Heart right ventricle (tissue), 16 donors: ENCODE measurements at regions of chr12 and their contacts with region 1.

Region 1: DNA sequence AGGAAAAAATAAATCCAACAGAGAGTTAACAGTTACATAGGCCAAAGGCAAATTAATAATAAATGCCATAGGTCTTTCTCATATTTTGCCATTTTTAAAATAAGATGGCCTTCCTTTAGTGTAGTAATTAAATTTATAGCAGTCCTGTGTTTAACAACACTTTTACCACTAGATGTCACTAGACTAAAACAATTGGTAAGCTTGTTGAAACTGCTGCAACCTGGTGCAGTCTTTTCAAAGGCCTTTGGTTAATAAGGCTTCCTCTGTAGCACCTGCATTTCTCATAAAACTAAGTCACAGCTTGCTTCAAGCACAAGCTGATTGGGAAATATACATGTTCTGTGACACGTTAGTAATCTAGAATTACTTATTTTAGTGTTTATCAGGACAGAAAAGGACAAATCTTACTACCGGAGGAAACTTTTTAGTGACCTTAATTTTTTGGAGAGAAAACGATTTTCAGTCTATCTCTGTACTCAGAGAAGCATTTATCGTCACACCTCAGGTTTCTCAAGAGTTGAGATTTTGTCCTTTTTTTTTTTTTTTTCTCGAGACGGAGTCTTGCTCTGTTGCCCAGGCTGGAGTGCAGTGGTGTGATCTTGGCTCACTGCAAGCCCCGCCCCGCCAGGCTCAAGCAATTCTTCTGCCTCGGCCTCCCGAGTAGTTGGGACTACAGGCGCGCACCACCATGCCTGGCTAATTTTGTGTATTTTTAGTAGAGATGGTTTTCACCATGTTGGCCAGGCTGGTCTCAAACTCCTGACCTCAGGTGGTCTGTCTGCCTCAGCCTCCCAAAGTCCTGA is 20.0 kb downstream of the BORCS5 start:
- DNase-seq: no peak
- ATAC-seq: peak in 7 of 8 donors; percentile 65 to 89 (median 80)
- H3K4me3 ChIP-seq: no peak overlapping the region
- H3K27ac ChIP-seq: peak overlapping the region in 1 of 10 donors; percentile 10
- H3K4me1 ChIP-seq: peaks cover 0 to 35% (median 9%) of the 10 kb centered on the region in 9 donors
- H3K27me3 ChIP-seq: no peaks in the 10 kb centered on the region
- CTCF ChIP-seq: peak; percentile 51 to 86 (median 75)

Region 2: DNA sequence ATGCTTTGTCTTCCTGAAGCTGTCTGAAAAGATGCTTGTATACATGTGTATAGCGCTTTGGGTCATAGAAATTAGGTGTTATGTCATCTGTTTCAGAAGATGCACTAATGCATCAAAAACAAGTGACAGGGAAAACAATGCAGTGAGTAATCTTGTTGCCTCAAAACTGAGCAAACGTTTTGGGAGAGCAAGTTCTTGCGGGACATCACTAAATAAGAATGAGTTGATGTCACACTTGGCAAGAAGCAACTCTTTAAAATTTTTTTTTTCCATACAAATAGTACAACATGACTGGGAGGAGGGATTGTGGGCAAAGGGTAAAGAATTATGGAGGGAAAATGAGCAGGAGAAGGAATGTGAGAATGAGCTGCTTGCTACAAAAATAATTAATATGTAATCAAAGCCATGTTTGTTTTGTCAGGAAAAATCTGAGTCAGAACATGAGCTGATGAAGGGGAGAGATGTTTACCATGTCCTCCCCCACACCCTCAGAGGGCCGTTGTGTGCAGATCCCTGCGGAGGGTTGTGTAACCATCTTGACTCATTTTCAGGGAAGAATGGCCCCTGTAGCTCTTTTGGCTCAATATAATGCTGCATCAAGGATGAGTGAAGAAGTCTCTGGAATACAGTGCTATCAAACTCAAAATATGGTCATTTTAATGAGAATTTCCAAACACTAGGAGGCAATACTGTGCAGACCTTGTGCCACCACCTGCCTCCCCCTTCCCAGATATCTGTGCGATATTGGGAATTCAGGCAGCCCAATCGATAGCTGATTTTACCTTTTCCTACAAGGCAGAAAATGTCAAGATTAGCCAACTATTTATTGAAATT is 21.4 kb after region 1 on chr12:
- intact Hi-C with region 1: no loop called
- DNase-seq: peak; percentile 29 to 48
- ATAC-seq: peak; percentile 82 to 97 (median 91)
- H3K4me3 ChIP-seq: no peak overlapping the region
- H3K27ac ChIP-seq: peak overlapping the region in 8 of 10 donors; percentile 1 to 59 (median 34)
- H3K4me1 ChIP-seq: peaks cover 0 to 32% (median 10%) of the 10 kb centered on the region in 9 donors
- H3K27me3 ChIP-seq: no peaks in the 10 kb centered on the region
- CTCF ChIP-seq: peak in 4 of 9 donors; percentile 18 to 35 (median 31)

Region 3: DNA sequence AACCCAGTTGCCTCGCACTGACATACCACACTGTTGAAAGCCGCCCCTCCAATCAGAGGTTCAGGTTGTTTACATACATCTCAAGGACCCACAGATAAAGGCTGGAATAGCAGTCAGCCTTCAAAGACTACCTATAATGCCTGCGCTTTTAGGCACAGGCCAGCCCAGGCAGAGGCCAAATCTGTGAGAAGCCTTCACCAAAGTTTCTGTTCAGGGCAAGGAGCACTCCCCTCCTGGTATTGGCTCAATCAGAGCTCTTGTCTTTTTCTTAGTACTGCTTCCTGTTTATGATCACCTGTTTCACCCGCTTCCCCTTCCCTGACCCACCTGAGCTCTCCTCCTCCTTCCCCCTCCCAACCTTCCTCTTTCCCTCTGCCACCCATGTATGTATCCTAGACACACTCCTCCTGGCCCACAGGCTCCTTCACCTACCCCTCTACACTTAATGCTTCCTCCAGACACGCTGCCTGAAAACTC is 151.0 kb after region 1 on chr12:
- intact Hi-C with region 1: no loop called
- DNase-seq: no peak
- ATAC-seq: peak in 3 of 8 donors; percentile 12 to 27 (median 20)
- H3K4me3 ChIP-seq: no peak overlapping the region
- H3K27ac ChIP-seq: peak overlapping the region in 2 of 10 donors; percentile 6 to 11
- H3K4me1 ChIP-seq: peaks cover 7 to 47% (median 29%) of the 10 kb centered on the region in 9 donors
- H3K27me3 ChIP-seq: no peaks in the 10 kb centered on the region
- CTCF ChIP-seq: no peak

Region 4: GRCh38 chr12:12654691-12655460 is 278.0 kb after region 1 on chr12:
- intact Hi-C with region 1: loop called (anchors 1 to 10 kb)
- DNase-seq: no peak
- ATAC-seq: no peak
- H3K4me3 ChIP-seq: no peak overlapping the region
- H3K27ac ChIP-seq: no peak overlapping the region
- H3K4me1 ChIP-seq: peaks cover 0 to 7% (median 0%) of the 10 kb centered on the region in 9 donors
- H3K27me3 ChIP-seq: no peaks in the 10 kb centered on the region
- CTCF ChIP-seq: no peak

Region 5: DNA sequence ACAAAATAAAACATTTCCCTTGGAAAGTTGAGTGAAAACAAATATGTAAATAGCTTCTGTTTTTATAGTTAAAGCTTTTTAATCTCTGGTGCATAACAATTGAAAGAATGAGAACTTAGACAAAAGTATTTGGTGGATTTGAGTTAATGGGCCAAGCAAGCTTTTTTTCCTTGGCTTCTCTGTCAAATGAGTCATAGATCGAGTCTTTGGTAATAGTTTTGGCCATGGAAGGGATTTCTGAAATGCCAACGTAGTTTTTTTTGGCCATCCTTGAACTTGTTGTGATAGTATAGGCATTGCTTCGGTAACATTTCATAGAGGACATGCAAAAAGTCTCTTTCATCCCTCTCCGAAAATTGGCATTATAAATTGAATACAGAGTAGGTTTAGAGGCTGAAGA is 284.2 kb after region 1 on chr12:
- intact Hi-C with region 1: loop called in 9 of 10 experiments (anchors 1 to 10 kb)
- DNase-seq: no peak
- ATAC-seq: no peak
- H3K4me3 ChIP-seq: no peak overlapping the region
- H3K27ac ChIP-seq: no peak overlapping the region
- H3K4me1 ChIP-seq: peaks cover 0 to 2% (median 0%) of the 10 kb centered on the region in 9 donors
- H3K27me3 ChIP-seq: no peaks in the 10 kb centered on the region
- CTCF ChIP-seq: no peak

Region 6: GRCh38 chr12:12696562-12697383 is 319.9 kb after region 1 on chr12:
- intact Hi-C with region 1: loop called in 7 of 10 experiments (anchors 5 to 10 kb)
- DNase-seq: peak; percentile 91 to 93
- ATAC-seq: peak; percentile 88 to 98 (median 94)
- H3K4me3 ChIP-seq: peak overlapping the region; percentile 35 to 71 (median 62)
- H3K27ac ChIP-seq: peak overlapping the region; percentile 91 to 99 (median 96)
- H3K4me1 ChIP-seq: peaks cover 0 to 17% (median 6%) of the 10 kb centered on the region in 9 donors
- H3K27me3 ChIP-seq: no peaks in the 10 kb centered on the region
- CTCF ChIP-seq: no peak

Region 7: GRCh38 chr12:12704593-12705230 is 327.9 kb after region 1 on chr12:
- intact Hi-C with region 1: loop called in 9 of 10 experiments (anchors 2 to 10 kb)
- DNase-seq: peak in 1 of 2 donors; percentile 63
- ATAC-seq: peak; percentile 94 to 99 (median 98)
- H3K4me3 ChIP-seq: no peak overlapping the region
- H3K27ac ChIP-seq: peak overlapping the region in 1 of 10 donors; percentile 15
- H3K4me1 ChIP-seq: peaks cover 0 to 11% (median 3%) of the 10 kb centered on the region in 9 donors
- H3K27me3 ChIP-seq: no peaks in the 10 kb centered on the region
- CTCF ChIP-seq: peak; percentile 58 to 95 (median 82)

Region 8: GRCh38 chr12:12736759-12737676 is 360.2 kb after region 1 on chr12:
- intact Hi-C with region 1: loop called in 1 of 10 experiments (anchors 10 kb)
- DNase-seq: peak in 1 of 2 donors; percentile 29
- ATAC-seq: peak; percentile 67 to 83 (median 79)
- H3K4me3 ChIP-seq: peak overlapping the region in 3 of 10 donors; percentile 2 to 24 (median 15)
- H3K27ac ChIP-seq: peak overlapping the region in 4 of 10 donors; percentile 24 to 80 (median 60)
- H3K4me1 ChIP-seq: peaks cover 0 to 36% (median 24%) of the 10 kb centered on the region in 9 donors
- H3K27me3 ChIP-seq: no peaks in the 10 kb centered on the region
- CTCF ChIP-seq: peak; percentile 38 to 81 (median 67)